ENCODE measurements at regions of chr17 and their contacts with region 1.

Region 1: GRCh38 chr17:40399185-40399584 is 18.5 kb downstream of the TOP2A start:
- DNase-seq: no peak
- H3K4me3 ChIP-seq: no peak overlapping the region
- H3K27ac ChIP-seq: no peak overlapping the region
- H3K4me1 ChIP-seq: no peaks in the 10 kb centered on the region
- H3K27me3 ChIP-seq: no peaks in the 10 kb centered on the region
- CTCF ChIP-seq: peak; percentile 46 to 66 (median 56)
- POLR2A ChIP-seq: no peak

Region 2: GRCh38 chr17:40531051-40531991 is 132.1 kb after region 1 on chr17:
- intact Hi-C with region 1: loop called (anchors 10 kb)
- DNase-seq: peak; percentile 19 to 27
- H3K4me3 ChIP-seq: no peak overlapping the region
- H3K27ac ChIP-seq: peak overlapping the region in 1 of 2 donors; percentile 93
- H3K4me1 ChIP-seq: peaks cover 0 to 11% of the 10 kb centered on the region in 2 donors
- H3K27me3 ChIP-seq: no peaks in the 10 kb centered on the region
- CTCF ChIP-seq: no peak
- POLR2A ChIP-seq: no peak